CD8-positive, alpha-beta T cell (primary cell): ENCODE measurements at regions of chr18 and their contacts with region 1.

Region 1: DNA sequence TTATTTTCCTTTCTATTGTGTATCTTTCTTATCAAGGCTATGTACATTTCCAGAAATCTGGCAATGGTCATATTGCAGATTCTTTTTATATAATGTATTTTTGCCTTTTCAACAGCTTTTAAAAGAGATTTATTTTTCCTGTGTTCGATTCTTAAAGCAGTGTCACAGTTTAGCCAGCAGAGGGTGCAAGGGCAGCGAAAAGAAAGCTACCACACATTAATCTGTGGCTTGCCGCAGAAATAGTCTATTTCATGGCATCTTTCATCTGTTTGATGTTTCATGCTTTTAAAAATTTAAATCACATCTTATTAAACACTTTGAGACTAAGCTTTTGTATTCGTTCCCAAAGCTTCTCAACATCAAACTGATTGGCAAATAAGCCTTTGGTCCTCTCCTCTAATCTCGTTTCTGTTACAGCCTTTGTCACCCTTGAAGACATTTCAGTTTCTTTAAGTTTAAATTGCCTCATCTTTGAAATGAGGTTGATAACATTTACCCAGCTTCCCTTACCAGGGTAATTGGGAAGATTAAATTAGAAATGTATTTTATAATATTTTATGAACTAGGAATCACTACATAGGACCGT is 73.3 kb downstream of the PIK3C3 start:
- DNase-seq: peak in 5 of 9 experiments; percentile 4 to 51 (median 22)
- ATAC-seq: peak; percentile 54
- H3K4me3 ChIP-seq: no peak overlapping the region
- H3K4me3 Mint-ChIP-seq: no peak overlapping the region
- H3K27ac ChIP-seq: no peak overlapping the region
- H3K27ac Mint-ChIP-seq: no peak overlapping the region
- H3K4me1 ChIP-seq: no peaks in the 10 kb centered on the region
- H3K4me1 Mint-ChIP-seq: peaks cover 23% of the 10 kb centered on the region
- H3K27me3 ChIP-seq: no peaks in the 10 kb centered on the region
- H3K27me3 Mint-ChIP-seq: no peaks in the 10 kb centered on the region
- CTCF ChIP-seq: peak; percentile 74

Region 2: GRCh38 chr18:41954827-41955613 is 73.3 kb before region 1 on chr18 and contains the start of gene PIK3C3:
- CTCF ChIA-PET with region 1: interaction called, 4 read pairs
- POLR2A ChIA-PET with region 1: no interaction called
- intact Hi-C with region 1: loop called in 1 of 2 experiments (anchors 5 kb)
- DNase-seq: peak; percentile 95 to 98 (median 98)
- ATAC-seq: peak; percentile 91
- H3K4me3 ChIP-seq: peak within 1 kb of the TSS; percentile 88 to 91
- H3K4me3 Mint-ChIP-seq: peak within 1 kb of the TSS; percentile 100
- H3K27ac ChIP-seq: peak within 1 kb of the TSS; percentile 84 to 86
- H3K27ac Mint-ChIP-seq: peak within 1 kb of the TSS; percentile 99
- H3K4me1 ChIP-seq: peaks cover 33% of the 10 kb centered on the region
- H3K4me1 Mint-ChIP-seq: peaks cover 44% of the 10 kb centered on the region
- H3K27me3 ChIP-seq: no peaks in the 10 kb centered on the region
- H3K27me3 Mint-ChIP-seq: no peaks in the 10 kb centered on the region
- CTCF ChIP-seq: no peak
- total RNA-seq, gene PIK3C3: 33.5 to 34.7 TPM

Region 3: DNA sequence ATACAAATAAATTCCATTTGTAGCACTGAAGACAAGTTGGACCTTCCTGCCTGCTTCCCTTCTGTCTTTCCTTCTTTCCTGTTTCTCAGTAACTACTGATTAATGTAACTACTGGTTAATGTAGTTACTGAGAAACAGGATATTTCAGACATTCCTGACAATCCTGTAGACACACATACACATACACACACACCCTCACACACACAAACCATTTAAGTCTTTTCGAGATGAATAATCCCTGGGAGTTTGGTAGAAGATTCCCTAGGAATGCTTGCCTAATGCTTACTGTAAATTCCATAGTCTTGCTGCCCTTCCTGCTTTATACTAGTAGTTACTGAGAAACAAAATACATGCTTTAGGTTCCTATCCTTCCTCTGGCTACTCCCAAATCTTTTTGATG is 10.6 kb after region 1 on chr18:
- CTCF ChIA-PET with region 1: interaction called, 17 read pairs
- POLR2A ChIA-PET with region 1: no interaction called
- intact Hi-C with region 1: no loop called
- DNase-seq: no peak
- ATAC-seq: no peak
- H3K4me3 ChIP-seq: no peak overlapping the region
- H3K4me3 Mint-ChIP-seq: no peak overlapping the region
- H3K27ac ChIP-seq: no peak overlapping the region
- H3K27ac Mint-ChIP-seq: no peak overlapping the region
- H3K4me1 ChIP-seq: no peaks in the 10 kb centered on the region
- H3K4me1 Mint-ChIP-seq: peaks cover 2% of the 10 kb centered on the region
- H3K27me3 ChIP-seq: no peaks in the 10 kb centered on the region
- H3K27me3 Mint-ChIP-seq: no peaks in the 10 kb centered on the region
- CTCF ChIP-seq: no peak